Left ventricle myocardium inferior (tissue), 1 donor: ENCODE measurements at regions of chr2 and their contacts with region 1.

Region 1: GRCh38 chr2:137947728-137948336 is 16.4 kb upstream of the HNMT start:
- DNase-seq: peak; percentile 71
- H3K4me3 ChIP-seq: no peak overlapping the region
- H3K27ac ChIP-seq: no peak overlapping the region
- H3K4me1 ChIP-seq: no peaks in the 10 kb centered on the region
- H3K27me3 ChIP-seq: no peaks in the 10 kb centered on the region
- CTCF ChIP-seq: peak; percentile 77

Region 2: DNA sequence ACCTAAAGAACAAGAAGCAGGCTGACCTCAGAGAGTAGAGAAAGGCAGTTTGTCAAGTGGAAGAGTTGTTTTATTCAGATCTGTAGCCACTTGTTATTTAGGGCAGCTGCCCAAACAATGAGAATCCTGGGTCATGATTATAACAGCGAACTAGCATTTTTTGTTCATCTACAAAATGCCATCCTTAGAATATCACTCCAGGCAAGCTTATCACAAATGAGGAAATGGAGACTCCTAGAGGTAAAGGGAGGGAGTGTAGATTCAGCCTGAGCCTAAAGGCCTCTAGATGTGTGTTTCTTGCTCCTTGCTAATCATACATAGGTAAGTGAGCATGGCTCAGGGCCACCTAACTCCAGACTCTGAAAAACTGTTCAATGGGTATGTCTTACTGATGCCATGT is 142.5 kb after region 1 on chr2:
- intact Hi-C with region 1: loop called (anchors 10 kb)
- DNase-seq: no peak
- H3K4me3 ChIP-seq: no peak overlapping the region
- H3K27ac ChIP-seq: no peak overlapping the region
- H3K4me1 ChIP-seq: peaks cover 5% of the 10 kb centered on the region
- H3K27me3 ChIP-seq: no peaks in the 10 kb centered on the region
- CTCF ChIP-seq: peak; percentile 62

Region 3: GRCh38 chr2:138373993-138374408 is 426.2 kb after region 1 on chr2:
- intact Hi-C with region 1: loop called (anchors 10 kb)
- DNase-seq: no peak
- H3K4me3 ChIP-seq: no peak overlapping the region
- H3K27ac ChIP-seq: no peak overlapping the region
- H3K4me1 ChIP-seq: no peaks in the 10 kb centered on the region
- H3K27me3 ChIP-seq: no peaks in the 10 kb centered on the region
- CTCF ChIP-seq: peak; percentile 75